ENCODE measurements at regions of chr20 and their contacts with region 1.

Region 1: GRCh38 chr20:25247956-25248785 is at the start of gene PYGB:
- DNase-seq: peak; percentile 98
- H3K27ac ChIP-seq: peak within 1 kb of the TSS; percentile 95
- CTCF ChIP-seq: no peak

Region 2: DNA sequence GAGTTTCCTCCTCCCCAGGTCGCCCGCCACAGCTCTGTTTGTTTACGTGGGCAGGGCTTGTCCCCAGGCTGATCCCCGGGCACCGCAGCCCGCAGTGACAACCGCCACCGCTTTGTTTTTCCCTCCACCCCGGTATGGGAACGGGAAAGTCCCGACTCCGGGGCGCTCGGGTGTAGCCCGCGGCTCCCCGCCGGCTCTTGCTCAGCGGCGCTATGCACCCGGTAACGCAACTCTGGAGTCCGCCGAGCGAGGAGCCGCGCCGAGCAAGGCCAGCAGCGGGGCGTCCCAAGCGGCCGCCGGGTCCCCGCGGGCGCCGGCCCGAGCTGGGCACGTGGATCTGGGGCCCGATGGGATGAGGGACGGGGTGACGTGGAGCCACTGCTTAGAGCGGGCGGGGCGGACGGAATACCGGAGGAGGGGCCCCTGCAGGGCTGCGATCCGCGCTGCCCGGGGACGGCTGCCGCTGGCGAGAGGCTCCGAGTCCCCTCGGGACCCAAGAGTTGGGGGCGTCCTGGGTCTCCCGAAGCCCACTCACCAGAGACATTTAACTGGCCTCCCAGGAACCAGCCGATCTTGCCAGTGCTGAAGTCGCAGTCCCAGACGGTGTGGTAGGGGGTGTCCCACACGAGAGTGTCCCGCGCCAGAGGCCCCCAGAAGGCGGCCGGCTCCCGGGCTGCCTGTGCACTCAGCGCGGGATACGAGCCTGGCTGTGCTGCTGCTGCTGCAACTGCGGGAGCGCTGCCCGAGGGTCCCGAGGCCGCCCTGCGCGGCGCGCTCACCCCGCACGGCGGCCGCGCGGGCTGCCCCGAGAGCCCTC is 190.7 kb before region 1 on chr20:
- CTCF ChIA-PET with region 1: no interaction called
- POLR2A ChIA-PET with region 1: no interaction called
- DNase-seq: peak; percentile 67
- H3K27ac ChIP-seq: peak overlapping the region; percentile 66
- CTCF ChIP-seq: no peak

Region 3: GRCh38 chr20:25195014-25195961 is 52.9 kb before region 1 on chr20 and contains the start of gene ENTPD6:
- CTCF ChIA-PET with region 1: no interaction called
- POLR2A ChIA-PET with region 1: no interaction called
- DNase-seq: peak; percentile 99
- H3K27ac ChIP-seq: peak within 1 kb of the TSS; percentile 78
- CTCF ChIP-seq: no peak; the same call in 1 of the 2 replicates

Region 4: GRCh38 chr20:25223179-25223661 is 25.0 kb before region 1 on chr20:
- CTCF ChIA-PET with region 1: interaction called, 10 read pairs
- POLR2A ChIA-PET with region 1: interaction called, 15 read pairs
- DNase-seq: peak; percentile 96
- H3K27ac ChIP-seq: peak overlapping the region; percentile 94
- CTCF ChIP-seq: no peak; the same call in 1 of the 2 replicates

Measured in RWPE1 (cell line).